Activated T-helper 1 cell treated with anti-CD3 and anti-CD28 coated beads, Interleukin-12 subunit alpha, Interleukin-12 subunit beta, Interleukin-2, Interleukin-4 antibody, amounts not matched to agents 30 ng/mL and 10 ng/mL and 1 ng/mL, durations not matched to agents 14 hours and 24 hours and 36 hours (primary cell): ENCODE measurements at regions of chr9 and their contacts with region 1.

Region 1: DNA sequence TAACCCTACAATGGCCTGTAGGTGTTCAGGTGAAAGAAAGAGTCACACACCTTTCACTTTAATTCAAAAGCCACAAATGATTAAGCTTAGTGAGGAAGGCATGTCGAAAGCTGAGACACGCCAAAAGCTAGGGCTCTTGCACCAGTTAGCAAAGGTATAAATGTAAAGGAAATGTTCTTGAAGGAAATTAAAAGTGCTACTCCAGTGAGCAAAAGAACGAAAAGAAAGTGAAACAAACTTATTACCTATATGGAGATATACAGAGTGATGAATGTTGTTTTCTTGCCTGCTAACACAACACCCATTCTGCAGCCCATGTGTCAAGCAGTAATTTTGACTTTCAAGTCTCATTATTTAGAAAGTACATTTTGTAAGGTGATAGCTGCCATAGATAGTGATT is 254.2 kb upstream of the SLC24A2 start:
- DNase-seq: no peak
- H3K4me3 Mint-ChIP-seq: peak overlapping the region; percentile 78
- H3K27ac Mint-ChIP-seq: peak overlapping the region; percentile 79
- H3K4me1 Mint-ChIP-seq: peaks cover 45% of the 10 kb centered on the region
- H3K27me3 Mint-ChIP-seq: no peaks in the 10 kb centered on the region

Region 2: GRCh38 chr9:19946441-19947109 is 96.5 kb before region 1 on chr9:
- intact Hi-C with region 1: loop called (anchors 5 kb)
- DNase-seq: no peak
- H3K4me3 Mint-ChIP-seq: no peak overlapping the region
- H3K27ac Mint-ChIP-seq: no peak overlapping the region
- H3K4me1 Mint-ChIP-seq: peaks cover 22% of the 10 kb centered on the region
- H3K27me3 Mint-ChIP-seq: peaks cover 13% of the 10 kb centered on the region

Region 3: DNA sequence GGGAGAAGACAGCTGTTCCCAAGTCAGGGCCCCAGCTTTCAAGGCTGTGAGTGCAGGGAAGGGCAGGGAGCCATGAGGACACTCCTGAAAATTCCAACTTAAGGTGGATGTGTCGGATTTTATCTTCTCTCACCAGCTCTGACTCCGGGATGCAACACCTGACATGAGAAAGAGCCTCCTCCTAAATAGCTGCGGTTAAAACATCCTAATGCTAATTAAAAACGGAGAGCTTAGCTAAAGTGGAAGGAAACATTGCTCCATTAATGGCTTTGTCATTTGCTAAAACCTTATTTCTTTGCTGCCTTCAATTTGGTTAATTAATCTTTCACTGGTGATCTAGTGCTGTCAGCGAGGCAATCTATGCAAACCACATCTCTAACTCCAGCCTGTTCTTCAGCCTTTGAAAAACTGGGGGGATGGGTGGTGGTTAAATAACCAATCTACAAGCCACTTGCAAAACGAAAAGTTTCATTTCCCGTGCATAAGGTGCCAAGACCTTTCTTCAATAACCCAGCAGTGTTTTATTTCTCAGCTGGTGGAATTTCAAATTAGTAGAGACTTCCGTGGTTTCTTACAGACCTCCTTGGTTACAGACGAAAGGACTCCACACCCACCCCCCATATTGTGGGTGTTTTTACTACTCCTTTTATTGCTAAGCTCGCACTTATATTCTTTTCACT is 199.6 kb after region 1 on chr9:
- intact Hi-C with region 1: loop called (anchors 5 kb)
- DNase-seq: peak; percentile 36
- H3K4me3 Mint-ChIP-seq: peak overlapping the region; percentile 36
- H3K27ac Mint-ChIP-seq: peak overlapping the region; percentile 27
- H3K4me1 Mint-ChIP-seq: peaks cover 65% of the 10 kb centered on the region
- H3K27me3 Mint-ChIP-seq: peaks cover 2% of the 10 kb centered on the region